ENCODE measurements at regions of chr16 and their contacts with region 1.

Region 1: DNA sequence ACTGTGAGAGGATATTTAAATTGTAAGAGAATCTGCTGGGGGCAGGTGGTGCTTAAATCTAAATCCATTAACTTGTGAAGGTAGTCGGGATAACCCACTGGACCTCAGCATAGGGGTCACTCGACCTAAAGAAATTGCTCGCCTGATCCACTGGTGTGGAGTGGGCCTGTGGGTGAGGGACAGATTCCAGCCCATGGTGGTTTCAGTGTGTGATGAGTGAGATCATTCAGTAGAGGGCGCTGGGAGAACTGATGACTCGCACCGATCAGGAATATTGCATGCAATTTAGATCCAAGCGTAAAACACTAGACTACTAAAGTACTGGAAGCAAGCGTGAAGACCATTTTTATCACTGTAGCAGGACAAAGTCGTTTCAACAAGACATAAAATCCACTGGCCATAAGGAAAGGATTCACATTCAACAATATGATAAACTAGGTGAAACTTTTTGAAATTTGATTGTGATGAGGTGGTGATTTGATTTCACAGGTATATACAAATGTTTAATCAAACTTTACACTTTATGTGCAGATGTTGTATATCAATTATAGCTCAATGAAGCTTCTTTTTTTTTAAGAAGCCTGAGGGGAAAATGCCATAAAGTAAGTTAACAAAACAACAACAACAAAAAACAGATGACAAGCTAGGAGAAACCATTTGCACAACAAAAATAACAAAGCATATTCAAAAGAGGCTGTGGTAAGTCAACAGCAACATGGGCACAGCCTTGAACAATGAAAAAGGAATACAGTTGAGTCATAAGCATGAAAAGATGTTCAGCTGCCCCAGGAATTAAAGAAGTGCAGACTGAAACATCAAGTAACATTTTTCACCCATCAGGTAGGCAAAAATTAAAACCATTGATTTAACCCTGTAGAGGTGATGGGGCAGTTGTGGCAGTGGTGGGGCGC is 7.5 kb upstream of the TMEM170A start:
- DNase-seq: peak; percentile 61
- ATAC-seq: peak; percentile 87
- H3K4me3 ChIP-seq: no peak overlapping the region
- H3K4me3 Mint-ChIP-seq: no peak overlapping the region
- H3K27ac ChIP-seq: no peak overlapping the region
- H3K27ac Mint-ChIP-seq: no peak overlapping the region
- H3K4me1 ChIP-seq: peaks cover 0 to 8% of the 10 kb centered on the region in 2 donors
- H3K4me1 Mint-ChIP-seq: peaks cover 2% of the 10 kb centered on the region
- H3K27me3 ChIP-seq: no peaks in the 10 kb centered on the region
- H3K27me3 Mint-ChIP-seq: no peaks in the 10 kb centered on the region
- CTCF ChIP-seq: peak; percentile 78

Region 2: GRCh38 chr16:75495076-75495674 is 23.2 kb after region 1 on chr16 and contains the start of gene CHST6:
- CTCF ChIA-PET with region 1: interaction called, 11 read pairs
- POLR2A ChIA-PET with region 1: no interaction called
- intact Hi-C with region 1: no loop called
- DNase-seq: peak; percentile 42
- ATAC-seq: peak; percentile 78
- H3K4me3 ChIP-seq: peak within 1 kb of the TSS in 4 of 5 experiments; percentile 13 to 46 (median 41)
- H3K4me3 Mint-ChIP-seq: peak within 1 kb of the TSS; percentile 78
- H3K27ac ChIP-seq: no peak within 1 kb of the TSS
- H3K27ac Mint-ChIP-seq: no peak within 1 kb of the TSS
- H3K4me1 ChIP-seq: peaks cover 7 to 11% of the 10 kb centered on the region in 2 donors
- H3K4me1 Mint-ChIP-seq: peaks cover 10% of the 10 kb centered on the region
- H3K27me3 ChIP-seq: peaks cover 0 to 16% (median 6%) of the 10 kb centered on the region in 4 experiments
- H3K27me3 Mint-ChIP-seq: peaks cover 28% of the 10 kb centered on the region
- CTCF ChIP-seq: no peak
- total RNA-seq, gene CHST6: 0.07 and 0.17 TPM in 2 replicates

Region 3: GRCh38 chr16:75550211-75550662 is 78.3 kb after region 1 on chr16:
- CTCF ChIA-PET with region 1: interaction called, 11 read pairs
- POLR2A ChIA-PET with region 1: no interaction called
- intact Hi-C with region 1: no loop called
- DNase-seq: peak; percentile 74
- ATAC-seq: peak; percentile 80
- H3K4me3 ChIP-seq: no peak overlapping the region
- H3K4me3 Mint-ChIP-seq: no peak overlapping the region
- H3K27ac ChIP-seq: no peak overlapping the region
- H3K27ac Mint-ChIP-seq: no peak overlapping the region
- H3K4me1 ChIP-seq: peaks cover 8 to 13% of the 10 kb centered on the region in 2 donors
- H3K4me1 Mint-ChIP-seq: peaks cover 12% of the 10 kb centered on the region
- H3K27me3 ChIP-seq: peaks cover 0 to 6% (median 0%) of the 10 kb centered on the region in 4 experiments
- H3K27me3 Mint-ChIP-seq: no peaks in the 10 kb centered on the region
- CTCF ChIP-seq: no peak

Region 4: GRCh38 chr16:75938818-75939217 is 466.8 kb after region 1 on chr16:
- CTCF ChIA-PET with region 1: no interaction called
- POLR2A ChIA-PET with region 1: no interaction called
- intact Hi-C with region 1: no loop called
- DNase-seq: no peak
- ATAC-seq: no peak
- H3K4me3 ChIP-seq: no peak overlapping the region
- H3K4me3 Mint-ChIP-seq: no peak overlapping the region
- H3K27ac ChIP-seq: no peak overlapping the region
- H3K27ac Mint-ChIP-seq: no peak overlapping the region
- H3K4me1 ChIP-seq: no peaks in the 10 kb centered on the region
- H3K4me1 Mint-ChIP-seq: no peaks in the 10 kb centered on the region
- H3K27me3 ChIP-seq: no peaks in the 10 kb centered on the region
- H3K27me3 Mint-ChIP-seq: no peaks in the 10 kb centered on the region
- CTCF ChIP-seq: no peak

Measured in B cell (primary cell).